Caco-2 (cell line): ENCODE measurements at regions of chr20 and their contacts with region 1.

Region 1: GRCh38 chr20:53623454-53624211 is 30.0 kb upstream of the ZNF217 start:
- DNase-seq: peak; percentile 86 to 89
- H3K4me3 ChIP-seq: peak overlapping the region; percentile 41
- H3K4me3 Mint-ChIP-seq: peak overlapping the region; percentile 83
- H3K27ac Mint-ChIP-seq: peak overlapping the region; percentile 97
- H3K4me1 ChIP-seq: peaks cover 33% of the 10 kb centered on the region
- H3K4me1 Mint-ChIP-seq: peaks cover 24% of the 10 kb centered on the region
- H3K27me3 ChIP-seq: no peaks in the 10 kb centered on the region
- H3K27me3 Mint-ChIP-seq: no peaks in the 10 kb centered on the region
- CTCF ChIP-seq: peak in 1 of 2 experiments; percentile 35

Region 2: DNA sequence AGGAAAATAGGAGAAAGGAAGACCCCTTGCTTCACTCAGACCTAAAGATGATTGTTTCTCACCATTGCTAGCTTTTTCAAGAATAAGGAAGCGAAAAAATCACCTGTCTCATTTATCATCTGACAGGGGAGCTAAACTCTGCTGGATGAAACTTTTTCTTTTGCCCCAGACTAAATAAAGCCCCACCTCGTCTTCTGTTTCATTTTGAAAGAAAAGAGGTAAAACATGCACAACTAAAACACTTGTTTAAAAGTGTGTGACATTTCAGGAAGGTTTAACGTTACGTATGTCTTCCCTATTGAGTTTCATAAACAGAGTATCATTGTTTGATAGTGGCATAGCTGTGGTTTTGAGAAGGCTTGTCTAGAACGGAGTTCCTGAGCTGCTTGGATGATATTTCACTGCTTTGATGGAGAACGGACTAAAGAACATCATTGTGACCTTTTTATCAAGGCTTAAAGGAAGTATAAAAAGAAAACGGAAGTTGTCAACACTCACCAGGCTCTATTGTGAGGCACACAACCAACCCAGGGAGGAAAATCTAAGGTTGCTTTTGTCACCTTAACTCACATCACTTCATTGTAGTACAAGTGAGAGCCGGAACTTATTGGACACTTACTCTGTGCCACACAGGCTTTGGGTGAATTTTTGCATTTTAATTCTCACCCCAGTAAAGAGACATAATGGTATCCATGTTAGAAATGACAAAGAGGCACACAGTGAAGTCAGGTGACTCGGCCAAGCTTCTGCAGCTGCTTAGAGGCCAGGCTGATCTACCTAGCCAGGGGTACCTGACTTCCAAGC is 621.9 kb before region 1 on chr20:
- CTCF ChIA-PET with region 1: no interaction called
- POLR2A ChIA-PET with region 1: no interaction called
- intact Hi-C with region 1: no loop called
- DNase-seq: no peak
- H3K4me3 ChIP-seq: no peak overlapping the region
- H3K4me3 Mint-ChIP-seq: no peak overlapping the region
- H3K27ac Mint-ChIP-seq: no peak overlapping the region
- H3K4me1 ChIP-seq: no peaks in the 10 kb centered on the region
- H3K4me1 Mint-ChIP-seq: no peaks in the 10 kb centered on the region
- H3K27me3 ChIP-seq: no peaks in the 10 kb centered on the region
- H3K27me3 Mint-ChIP-seq: peaks cover 18% of the 10 kb centered on the region
- CTCF ChIP-seq: no peak

Region 3: DNA sequence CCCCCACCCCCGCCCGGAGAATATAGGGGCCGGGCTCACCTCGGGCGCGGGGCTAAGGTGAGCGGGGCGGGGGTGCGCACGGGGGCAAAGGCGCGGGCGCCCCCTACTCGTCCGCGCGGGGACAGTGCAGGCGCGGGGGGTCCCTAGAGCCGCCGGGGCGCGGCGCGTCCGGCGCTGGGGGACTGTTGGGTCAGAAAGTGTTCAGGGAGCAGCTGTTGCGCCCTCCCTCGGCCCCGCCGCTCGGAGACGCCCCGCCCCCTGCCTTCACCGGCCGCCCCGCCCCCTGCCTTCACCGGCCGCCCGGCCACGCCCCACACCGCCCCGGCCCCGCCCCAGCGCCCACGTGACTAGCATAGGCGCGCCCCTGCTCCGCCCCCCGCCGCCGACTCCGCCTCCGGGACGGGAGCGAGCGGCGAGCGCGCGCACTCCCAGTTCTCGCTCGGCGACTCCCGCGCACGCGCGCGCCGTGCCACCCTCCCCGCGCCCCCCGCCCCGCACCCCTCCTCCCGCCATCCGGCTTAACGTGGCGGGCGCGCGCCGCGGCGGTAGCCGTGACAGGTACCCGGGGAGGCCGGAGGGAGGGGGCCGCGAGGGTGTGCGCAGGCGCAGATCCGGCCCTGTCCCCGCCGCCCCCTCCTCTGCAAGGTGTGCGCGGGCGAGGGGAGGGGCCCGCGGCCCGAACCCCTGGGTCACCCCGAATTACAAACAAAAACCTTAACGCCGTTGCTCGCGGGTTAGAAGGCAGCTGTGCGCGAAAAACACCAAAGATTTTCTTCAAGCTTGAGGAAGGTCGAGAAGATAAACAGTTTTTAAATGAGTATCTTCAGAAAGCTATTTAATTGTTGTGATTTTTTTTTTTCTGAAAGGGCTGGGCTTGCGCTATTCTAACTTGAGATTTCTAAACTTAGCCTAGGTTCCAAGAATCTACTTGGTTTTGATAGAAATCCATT is 29.3 kb before region 1 on chr20:
- CTCF ChIA-PET with region 1: interaction called, 5 read pairs
- POLR2A ChIA-PET with region 1: interaction called, 7 read pairs
- intact Hi-C with region 1: loop called (anchors 1 kb)
- DNase-seq: peak; percentile 99 to 100
- H3K4me3 ChIP-seq: peak overlapping the region; percentile 98
- H3K4me3 Mint-ChIP-seq: peak overlapping the region; percentile 87
- H3K27ac Mint-ChIP-seq: peak overlapping the region; percentile 80
- H3K4me1 ChIP-seq: peaks cover 38% of the 10 kb centered on the region
- H3K4me1 Mint-ChIP-seq: peaks cover 44% of the 10 kb centered on the region
- H3K27me3 ChIP-seq: no peaks in the 10 kb centered on the region
- H3K27me3 Mint-ChIP-seq: no peaks in the 10 kb centered on the region
- CTCF ChIP-seq: peak; percentile 64 to 79

Region 4: DNA sequence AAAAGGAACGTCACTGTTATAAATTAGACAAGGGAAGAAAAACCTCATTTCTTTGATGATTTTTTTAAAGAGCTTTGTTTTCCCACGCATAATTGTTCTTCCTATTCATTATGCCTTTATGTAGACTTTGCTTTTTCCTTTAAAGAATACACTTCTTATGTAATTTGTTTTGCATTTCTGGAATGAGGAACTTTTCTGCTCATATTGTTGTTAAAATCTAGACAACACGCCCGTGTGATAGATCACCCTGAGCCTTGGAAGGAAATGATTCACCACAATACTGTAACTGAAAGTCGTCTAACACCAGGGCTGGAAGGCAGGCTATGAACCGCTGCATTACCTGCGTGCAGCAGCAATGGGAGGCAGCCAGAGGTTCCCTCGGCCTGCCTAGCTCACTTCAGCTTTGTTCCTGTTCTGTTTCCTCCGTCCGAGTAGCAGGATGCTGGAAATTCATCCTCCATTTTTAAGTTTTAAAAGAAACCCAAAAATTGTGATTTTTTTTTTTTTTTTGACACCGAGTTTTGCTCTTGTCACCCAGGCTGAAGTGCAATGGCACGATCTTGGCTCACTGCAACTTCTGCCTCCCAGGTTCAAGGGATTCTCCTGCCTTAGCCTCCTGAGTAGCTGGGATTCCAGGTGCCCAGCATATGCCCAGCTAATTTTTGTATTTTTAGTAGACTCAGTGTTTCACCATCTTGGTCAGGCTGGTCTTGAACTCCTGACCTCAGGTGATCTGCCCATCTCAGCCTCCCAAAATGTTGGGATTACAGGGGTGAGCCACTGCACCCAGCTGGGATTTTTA is 19.6 kb after region 1 on chr20:
- CTCF ChIA-PET with region 1: interaction called, 11 read pairs
- POLR2A ChIA-PET with region 1: interaction called, 3 read pairs
- intact Hi-C with region 1: loop called (anchors 1 kb)
- DNase-seq: peak; percentile 37 to 54
- H3K4me3 ChIP-seq: no peak overlapping the region
- H3K4me3 Mint-ChIP-seq: no peak overlapping the region
- H3K27ac Mint-ChIP-seq: peak overlapping the region; percentile 28
- H3K4me1 ChIP-seq: peaks cover 30% of the 10 kb centered on the region
- H3K4me1 Mint-ChIP-seq: peaks cover 31% of the 10 kb centered on the region
- H3K27me3 ChIP-seq: no peaks in the 10 kb centered on the region
- H3K27me3 Mint-ChIP-seq: no peaks in the 10 kb centered on the region
- CTCF ChIP-seq: no peak

Region 5: GRCh38 chr20:53660078-53660909 is 36.7 kb after region 1 on chr20:
- CTCF ChIA-PET with region 1: interaction called, 3 read pairs
- POLR2A ChIA-PET with region 1: interaction called, 10 read pairs
- intact Hi-C with region 1: no loop called
- DNase-seq: peak in 1 of 2 experiments; percentile 16
- H3K4me3 ChIP-seq: no peak overlapping the region
- H3K4me3 Mint-ChIP-seq: no peak overlapping the region
- H3K27ac Mint-ChIP-seq: peak overlapping the region; percentile 67
- H3K4me1 ChIP-seq: peaks cover 29% of the 10 kb centered on the region
- H3K4me1 Mint-ChIP-seq: peaks cover 53% of the 10 kb centered on the region
- H3K27me3 ChIP-seq: no peaks in the 10 kb centered on the region
- H3K27me3 Mint-ChIP-seq: no peaks in the 10 kb centered on the region
- CTCF ChIP-seq: no peak